Activated naive CD4-positive, alpha-beta T cell treated with anti-CD3 and anti-CD28 coated beads for 36 hours (primary cell): ENCODE measurements at regions of chr10 and their contacts with region 1.

Region 1: DNA sequence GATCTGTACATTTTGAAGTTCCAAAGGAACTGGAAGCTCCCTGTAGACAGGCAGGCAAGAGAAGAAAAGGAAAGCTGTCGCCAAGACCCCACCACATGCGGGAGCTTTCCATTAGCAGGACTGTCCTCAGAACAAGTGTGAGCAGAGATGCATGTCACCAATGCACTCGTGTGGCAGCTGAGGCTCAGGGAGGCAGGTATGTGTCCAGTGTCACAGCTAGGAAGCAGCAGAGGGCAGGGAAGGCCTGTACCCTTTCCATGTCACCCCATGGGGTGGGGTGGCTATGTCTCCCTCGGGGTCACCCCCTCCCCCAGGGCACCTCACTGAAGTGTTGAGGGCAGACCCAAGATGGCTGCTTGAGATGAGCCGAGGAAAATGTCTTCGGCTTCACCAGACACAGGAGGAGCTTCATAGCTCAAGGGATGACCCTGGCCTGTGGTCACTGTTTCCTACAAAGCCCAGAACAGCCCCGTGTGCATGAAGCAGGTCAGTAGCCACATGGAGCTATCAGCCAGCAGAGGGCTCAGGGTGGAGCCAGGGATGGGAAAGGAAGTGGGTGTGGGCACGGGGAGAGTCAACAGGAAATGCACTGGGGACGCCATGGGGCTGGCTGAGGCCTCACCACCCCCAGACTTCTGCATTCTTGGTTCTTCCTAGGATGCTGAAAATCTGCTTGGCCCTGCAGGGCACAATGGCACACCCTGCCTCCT is 96.6 kb downstream of the FAM53B start:
- DNase-seq: peak; percentile 88
- H3K4me3 Mint-ChIP-seq: peak overlapping the region; percentile 49
- H3K27ac Mint-ChIP-seq: peak overlapping the region; percentile 73
- H3K4me1 Mint-ChIP-seq: peaks cover 69% of the 10 kb centered on the region
- H3K27me3 Mint-ChIP-seq: no peaks in the 10 kb centered on the region

Region 2: DNA sequence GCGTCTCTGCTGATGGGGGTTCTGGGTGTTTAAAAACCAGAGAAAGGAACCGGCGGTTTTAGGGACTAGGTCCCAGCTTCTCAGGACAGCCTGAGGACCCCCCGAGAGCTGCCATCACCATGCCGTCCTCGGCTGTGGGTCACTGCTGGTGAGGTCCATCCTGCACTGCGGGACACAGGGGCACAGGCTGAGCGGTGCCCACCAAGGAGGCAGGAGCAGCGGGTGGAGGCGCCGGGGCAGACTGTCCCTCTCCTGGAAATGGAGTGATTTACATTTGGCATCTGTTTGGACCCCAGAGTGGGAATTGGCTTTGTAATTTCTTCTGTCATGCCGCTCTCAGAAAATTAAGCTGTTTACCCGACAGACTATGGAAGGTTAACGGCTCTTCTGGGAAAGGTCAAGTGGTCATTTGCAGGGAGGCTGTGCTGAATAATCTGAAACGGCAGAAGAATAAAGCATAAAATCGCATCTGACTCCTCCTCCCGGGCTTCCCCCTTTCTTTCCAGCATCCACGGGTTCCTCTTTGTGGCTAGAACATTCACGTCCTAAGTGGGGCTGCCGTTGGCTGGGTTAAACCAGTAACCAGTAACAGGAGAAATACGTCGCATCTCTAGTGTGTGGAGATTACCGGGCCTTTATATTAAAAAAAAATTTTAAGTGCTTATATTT is 154.2 kb before region 1 on chr10:
- CTCF ChIA-PET with region 1: no interaction called
- intact Hi-C with region 1: no loop called
- DNase-seq: no peak
- H3K4me3 Mint-ChIP-seq: no peak overlapping the region
- H3K27ac Mint-ChIP-seq: no peak overlapping the region
- H3K4me1 Mint-ChIP-seq: peaks cover 11% of the 10 kb centered on the region
- H3K27me3 Mint-ChIP-seq: no peaks in the 10 kb centered on the region

Region 3: GRCh38 chr10:124560377-124561105 is 87.0 kb before region 1 on chr10:
- CTCF ChIA-PET with region 1: no interaction called
- intact Hi-C with region 1: no loop called
- DNase-seq: no peak
- H3K4me3 Mint-ChIP-seq: no peak overlapping the region
- H3K27ac Mint-ChIP-seq: no peak overlapping the region
- H3K4me1 Mint-ChIP-seq: no peaks in the 10 kb centered on the region
- H3K27me3 Mint-ChIP-seq: no peaks in the 10 kb centered on the region

Region 4: GRCh38 chr10:124588736-124589490 is 58.7 kb before region 1 on chr10:
- CTCF ChIA-PET with region 1: no interaction called
- intact Hi-C with region 1: no loop called
- DNase-seq: no peak
- H3K4me3 Mint-ChIP-seq: no peak overlapping the region
- H3K27ac Mint-ChIP-seq: no peak overlapping the region
- H3K4me1 Mint-ChIP-seq: no peaks in the 10 kb centered on the region
- H3K27me3 Mint-ChIP-seq: no peaks in the 10 kb centered on the region

Region 5: GRCh38 chr10:124632064-124632531 is 15.5 kb before region 1 on chr10:
- CTCF ChIA-PET with region 1: interaction called, 11 read pairs
- intact Hi-C with region 1: no loop called
- DNase-seq: peak; percentile 52
- H3K4me3 Mint-ChIP-seq: no peak overlapping the region
- H3K27ac Mint-ChIP-seq: no peak overlapping the region
- H3K4me1 Mint-ChIP-seq: peaks cover 32% of the 10 kb centered on the region
- H3K27me3 Mint-ChIP-seq: no peaks in the 10 kb centered on the region

Region 6: GRCh38 chr10:124671486-124672075 is 24.0 kb after region 1 on chr10:
- CTCF ChIA-PET with region 1: interaction called, 3 read pairs
- intact Hi-C with region 1: loop called (anchors 1 kb)
- DNase-seq: peak; percentile 59
- H3K4me3 Mint-ChIP-seq: no peak overlapping the region
- H3K27ac Mint-ChIP-seq: peak overlapping the region; percentile 64
- H3K4me1 Mint-ChIP-seq: peaks cover 73% of the 10 kb centered on the region
- H3K27me3 Mint-ChIP-seq: no peaks in the 10 kb centered on the region

Region 7: GRCh38 chr10:124688889-124689670 is 41.5 kb after region 1 on chr10:
- CTCF ChIA-PET with region 1: interaction called, 14 read pairs
- intact Hi-C with region 1: loop called (anchors 1 kb)
- DNase-seq: peak; percentile 83
- H3K4me3 Mint-ChIP-seq: no peak overlapping the region
- H3K27ac Mint-ChIP-seq: peak overlapping the region; percentile 46
- H3K4me1 Mint-ChIP-seq: peaks cover 74% of the 10 kb centered on the region
- H3K27me3 Mint-ChIP-seq: no peaks in the 10 kb centered on the region

Region 8: DNA sequence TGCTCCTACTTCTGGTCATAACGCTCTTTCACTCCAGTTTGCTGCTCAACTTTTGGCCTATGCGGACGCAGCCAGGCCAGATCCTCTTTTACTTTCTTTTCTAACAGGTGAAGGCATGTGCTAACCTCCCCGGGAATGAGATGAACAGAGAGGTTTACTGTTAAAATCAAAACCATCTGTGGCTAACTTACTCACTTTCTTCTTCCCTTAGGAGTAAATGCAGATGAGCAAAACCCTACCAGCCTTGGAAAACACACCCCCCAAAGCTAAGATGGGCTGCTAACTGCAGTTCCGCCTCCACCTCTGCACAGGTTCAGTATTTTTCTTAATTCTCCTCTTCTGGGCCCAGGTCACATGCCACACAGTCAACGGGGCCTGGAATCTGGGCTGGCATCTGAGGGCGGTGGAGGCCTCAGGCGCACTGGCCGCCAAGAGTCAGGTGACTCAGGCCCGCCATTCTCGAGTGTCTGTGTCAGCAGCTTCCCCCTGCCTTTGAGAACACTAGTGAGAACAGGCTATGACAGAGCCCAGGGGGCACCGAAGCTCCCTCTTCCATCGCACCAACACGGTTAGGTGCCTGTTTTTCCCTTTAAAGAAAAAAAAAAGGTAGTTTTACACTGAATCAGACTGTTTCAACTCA is 85.5 kb after region 1 on chr10:
- CTCF ChIA-PET with region 1: interaction called, 10 read pairs
- intact Hi-C with region 1: loop called (anchors 2 kb)
- DNase-seq: peak; percentile 82
- H3K4me3 Mint-ChIP-seq: peak overlapping the region; percentile 53
- H3K27ac Mint-ChIP-seq: peak overlapping the region; percentile 77
- H3K4me1 Mint-ChIP-seq: peaks cover 82% of the 10 kb centered on the region
- H3K27me3 Mint-ChIP-seq: no peaks in the 10 kb centered on the region